GM10248 (cell line): ENCODE measurements at regions of chr2 and their contacts with region 1.

Region 1: DNA sequence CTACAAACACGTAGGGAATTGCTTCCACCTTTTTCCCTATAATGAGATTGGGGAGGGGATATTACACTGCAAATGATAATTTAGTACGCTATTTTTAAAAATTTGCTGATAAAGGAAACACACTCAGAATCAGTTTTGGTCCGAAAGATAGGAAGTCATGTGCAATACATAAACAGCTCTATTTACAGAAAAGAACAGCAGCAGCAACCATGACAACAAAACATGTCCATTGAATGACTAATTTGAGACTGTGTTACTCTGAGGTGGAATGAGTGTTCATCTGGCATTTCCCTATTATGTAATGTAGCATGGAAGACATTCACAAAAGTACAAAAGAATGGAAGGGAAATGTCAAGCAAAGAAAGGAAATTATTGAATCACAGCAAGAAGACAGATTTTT is 337.2 kb downstream of the NBAS start:
- DNase-seq: no peak
- CTCF ChIP-seq: no peak

Region 2: GRCh38 chr2:15112216-15112615 is 111.7 kb before region 1 on chr2:
- CTCF ChIA-PET with region 1: no interaction called
- POLR2A ChIA-PET with region 1: no interaction called
- DNase-seq: no peak
- CTCF ChIP-seq: no peak

Region 3: GRCh38 chr2:15241201-15241600 is 17.3 kb after region 1 on chr2:
- CTCF ChIA-PET with region 1: interaction called, 21 read pairs
- POLR2A ChIA-PET with region 1: no interaction called
- DNase-seq: no peak
- CTCF ChIP-seq: no peak